Activated CD8-positive, alpha-beta T cell treated with anti-CD3 and anti-CD28 coated beads for 36 hours (primary cell): ENCODE measurements at regions of chr15 and their contacts with region 1.

Region 1: GRCh38 chr15:65304389-65305144 is at the start of gene RNU5B-1:
- DNase-seq: peak; percentile 89
- ATAC-seq: peak; percentile 74
- H3K4me3 Mint-ChIP-seq: peak within 1 kb of the TSS; percentile 93
- H3K27ac Mint-ChIP-seq: peak within 1 kb of the TSS; percentile 98
- H3K4me1 Mint-ChIP-seq: peaks cover 26% of the 10 kb centered on the region
- H3K27me3 Mint-ChIP-seq: no peaks in the 10 kb centered on the region
- CTCF ChIP-seq: peak; percentile 95
- total RNA-seq, gene RNU5B-1: not detected

Region 2: GRCh38 chr15:65184868-65185738 is 119.5 kb before region 1 on chr15 and contains the start of gene CLPX:
- CTCF ChIA-PET with region 1: interaction called, 42 read pairs
- POLR2A ChIA-PET with region 1: interaction called, 52 read pairs
- intact Hi-C with region 1: no loop called
- DNase-seq: peak; percentile 94
- ATAC-seq: peak; percentile 91
- H3K4me3 Mint-ChIP-seq: peak within 1 kb of the TSS; percentile 94
- H3K27ac Mint-ChIP-seq: peak within 1 kb of the TSS; percentile 96
- H3K4me1 Mint-ChIP-seq: peaks cover 22% of the 10 kb centered on the region
- H3K27me3 Mint-ChIP-seq: no peaks in the 10 kb centered on the region
- CTCF ChIP-seq: no peak
- total RNA-seq, gene CLPX: 76.7 to 77.4 TPM

Region 3: DNA sequence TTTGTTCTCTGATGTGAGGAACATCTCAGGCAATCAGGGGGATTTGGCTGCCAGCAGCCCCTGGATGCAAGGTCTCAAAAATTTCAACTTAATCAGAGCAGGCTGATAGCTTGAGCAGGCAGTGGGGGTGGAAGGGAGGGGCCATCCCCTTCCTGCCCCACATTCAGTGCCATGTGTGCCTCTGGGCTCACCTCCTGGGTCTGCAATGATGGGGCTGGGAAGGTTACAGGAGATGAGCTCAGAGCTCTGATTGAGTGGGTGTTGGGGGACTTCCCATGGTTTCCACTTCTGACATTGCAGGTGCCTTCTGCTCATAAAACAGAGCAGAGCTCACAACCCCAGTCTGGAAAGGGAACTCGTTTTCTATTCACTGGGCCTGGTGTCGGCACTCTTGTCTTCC is 54.9 kb before region 1 on chr15:
- CTCF ChIA-PET with region 1: no interaction called
- POLR2A ChIA-PET with region 1: interaction called, 12 read pairs
- intact Hi-C with region 1: no loop called
- DNase-seq: peak; percentile 94
- ATAC-seq: peak; percentile 99
- H3K4me3 Mint-ChIP-seq: no peak overlapping the region
- H3K27ac Mint-ChIP-seq: peak overlapping the region; percentile 84
- H3K4me1 Mint-ChIP-seq: peaks cover 20% of the 10 kb centered on the region
- H3K27me3 Mint-ChIP-seq: no peaks in the 10 kb centered on the region
- CTCF ChIP-seq: no peak

Region 4: DNA sequence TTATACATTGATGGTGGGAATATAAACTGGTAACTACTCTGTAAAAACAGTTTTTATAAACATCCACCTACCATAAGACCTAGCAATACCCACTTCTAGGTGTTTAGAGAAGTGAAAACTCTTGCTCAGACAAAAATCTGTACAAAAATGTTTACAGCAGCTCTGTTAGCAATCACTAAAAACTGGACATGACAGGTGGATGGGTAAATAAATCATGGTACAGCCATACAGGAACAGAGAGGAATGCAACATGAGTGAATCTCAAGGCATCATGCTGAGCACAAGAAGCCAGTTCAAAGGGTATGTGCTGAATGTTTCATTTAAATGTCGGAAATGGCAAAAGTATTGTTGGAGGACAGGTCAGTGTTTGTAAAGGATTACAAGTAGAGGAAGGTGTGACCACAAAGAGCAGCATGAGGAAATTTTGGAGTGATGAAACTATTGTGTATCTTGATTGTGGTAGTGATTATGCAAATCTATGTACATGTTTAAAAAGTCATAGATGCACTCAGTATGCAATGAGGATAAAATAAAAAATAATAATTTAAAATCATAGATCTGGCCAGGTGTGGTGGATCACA is 11.5 kb before region 1 on chr15:
- CTCF ChIA-PET with region 1: interaction called, 4 read pairs
- POLR2A ChIA-PET with region 1: interaction called, 80 read pairs
- intact Hi-C with region 1: loop called (anchors 1 kb)
- DNase-seq: no peak
- ATAC-seq: no peak
- H3K4me3 Mint-ChIP-seq: no peak overlapping the region
- H3K27ac Mint-ChIP-seq: no peak overlapping the region
- H3K4me1 Mint-ChIP-seq: peaks cover 18% of the 10 kb centered on the region
- H3K27me3 Mint-ChIP-seq: no peaks in the 10 kb centered on the region
- CTCF ChIP-seq: no peak

Region 5: GRCh38 chr15:65384895-65385858 is 80.6 kb after region 1 on chr15:
- CTCF ChIA-PET with region 1: interaction called, 8 read pairs
- POLR2A ChIA-PET with region 1: interaction called, 11 read pairs
- intact Hi-C with region 1: no loop called
- DNase-seq: peak; percentile 91
- ATAC-seq: peak; percentile 87
- H3K4me3 Mint-ChIP-seq: peak overlapping the region; percentile 85
- H3K27ac Mint-ChIP-seq: peak overlapping the region; percentile 81
- H3K4me1 Mint-ChIP-seq: peaks cover 8% of the 10 kb centered on the region
- H3K27me3 Mint-ChIP-seq: peaks cover 8% of the 10 kb centered on the region
- CTCF ChIP-seq: peak; percentile 75